B cell (primary cell): ENCODE measurements at regions of chr2 and their contacts with region 1.

Region 1: GRCh38 chr2:27281855-27282559 is at the start of gene TRIM54:
- DNase-seq: no peak
- ATAC-seq: no peak
- H3K4me3 ChIP-seq: no peak within 1 kb of the TSS
- H3K4me3 Mint-ChIP-seq: no peak within 1 kb of the TSS
- H3K27ac ChIP-seq: no peak within 1 kb of the TSS
- H3K27ac Mint-ChIP-seq: no peak within 1 kb of the TSS
- H3K4me1 ChIP-seq: no peaks in the 10 kb centered on the region
- H3K4me1 Mint-ChIP-seq: peaks cover 5% of the 10 kb centered on the region
- H3K27me3 ChIP-seq: peaks cover 0 to 9% (median 0%) of the 10 kb centered on the region in 4 experiments
- H3K27me3 Mint-ChIP-seq: peaks cover 40% of the 10 kb centered on the region
- CTCF ChIP-seq: no peak
- total RNA-seq, gene TRIM54: not detected in 2 replicates

Region 2: GRCh38 chr2:26846328-26847306 is 435.4 kb before region 1 on chr2:
- CTCF ChIA-PET with region 1: interaction called, 41 read pairs
- POLR2A ChIA-PET with region 1: no interaction called
- intact Hi-C with region 1: no loop called
- DNase-seq: peak; percentile 81
- ATAC-seq: peak; percentile 76
- H3K4me3 ChIP-seq: no peak overlapping the region
- H3K4me3 Mint-ChIP-seq: peak overlapping the region; percentile 85
- H3K27ac ChIP-seq: no peak overlapping the region
- H3K27ac Mint-ChIP-seq: no peak overlapping the region
- H3K4me1 ChIP-seq: peaks cover 37% of the 10 kb centered on the region in 2 donors
- H3K4me1 Mint-ChIP-seq: peaks cover 18% of the 10 kb centered on the region
- H3K27me3 ChIP-seq: peaks cover 0 to 58% (median 49%) of the 10 kb centered on the region in 4 experiments
- H3K27me3 Mint-ChIP-seq: peaks cover 52% of the 10 kb centered on the region
- CTCF ChIP-seq: peak; percentile 83

Region 3: GRCh38 chr2:27170581-27171333 is 111.2 kb before region 1 on chr2:
- CTCF ChIA-PET with region 1: interaction called, 20 read pairs
- POLR2A ChIA-PET with region 1: no interaction called
- intact Hi-C with region 1: no loop called
- DNase-seq: no peak
- ATAC-seq: no peak
- H3K4me3 ChIP-seq: no peak overlapping the region
- H3K4me3 Mint-ChIP-seq: peak overlapping the region; percentile 55
- H3K27ac ChIP-seq: no peak overlapping the region
- H3K27ac Mint-ChIP-seq: no peak overlapping the region
- H3K4me1 ChIP-seq: peaks cover 7 to 10% of the 10 kb centered on the region in 2 donors
- H3K4me1 Mint-ChIP-seq: peaks cover 7% of the 10 kb centered on the region
- H3K27me3 ChIP-seq: peaks cover 0 to 3% (median 0%) of the 10 kb centered on the region in 4 experiments
- H3K27me3 Mint-ChIP-seq: no peaks in the 10 kb centered on the region
- CTCF ChIP-seq: no peak

Region 4: DNA sequence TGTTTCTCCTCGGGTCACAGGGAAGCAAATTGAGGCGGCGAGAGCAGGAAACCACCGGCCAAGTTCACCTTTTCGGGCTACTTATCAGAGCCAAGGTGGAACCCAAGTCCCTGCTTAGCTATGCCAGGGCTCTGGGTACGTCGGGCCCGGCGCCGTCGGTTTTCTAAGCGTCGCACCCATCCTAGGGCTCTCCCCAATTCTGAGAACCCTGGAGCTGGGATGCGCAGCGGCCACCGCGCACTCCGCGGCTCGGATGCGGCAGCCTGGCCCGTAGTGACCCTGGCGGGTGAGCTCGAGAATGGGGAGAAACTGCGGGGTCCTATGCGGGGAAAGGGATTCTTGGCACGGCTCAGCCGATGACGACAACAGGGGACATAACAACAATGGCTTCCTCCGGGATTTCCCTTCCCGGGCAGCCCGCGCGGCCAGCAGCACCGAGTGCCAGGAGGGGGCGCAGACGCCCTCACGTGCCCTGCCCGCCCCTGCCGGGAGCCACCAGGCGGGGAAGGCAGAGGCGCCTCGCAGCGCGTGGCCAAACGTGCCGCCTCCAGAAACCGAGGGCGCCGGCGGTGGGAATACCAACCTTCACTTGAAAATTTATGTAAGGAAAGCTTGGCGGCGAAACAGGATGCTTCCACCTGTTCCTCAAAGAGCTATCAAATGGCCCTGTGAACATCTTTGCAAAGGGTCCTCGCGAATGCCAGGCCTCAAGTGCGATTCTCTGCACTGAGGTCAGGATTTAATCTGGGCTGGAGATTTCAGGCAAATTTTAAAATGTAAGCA is 17.1 kb before region 1 on chr2:
- CTCF ChIA-PET with region 1: interaction called, 50 read pairs
- POLR2A ChIA-PET with region 1: interaction called, 5 read pairs
- intact Hi-C with region 1: loop called (anchors 1 kb)
- DNase-seq: peak; percentile 88
- ATAC-seq: peak; percentile 69
- H3K4me3 ChIP-seq: peak overlapping the region; percentile 23 to 68 (median 64)
- H3K4me3 Mint-ChIP-seq: peak overlapping the region; percentile 94
- H3K27ac ChIP-seq: peak overlapping the region in 1 of 2 donors; percentile 59
- H3K27ac Mint-ChIP-seq: no peak overlapping the region
- H3K4me1 ChIP-seq: peaks cover 35 to 38% of the 10 kb centered on the region in 2 donors
- H3K4me1 Mint-ChIP-seq: peaks cover 35% of the 10 kb centered on the region
- H3K27me3 ChIP-seq: peaks cover 0 to 69% (median 32%) of the 10 kb centered on the region in 4 experiments
- H3K27me3 Mint-ChIP-seq: peaks cover 47% of the 10 kb centered on the region
- CTCF ChIP-seq: peak; percentile 68

Region 5: DNA sequence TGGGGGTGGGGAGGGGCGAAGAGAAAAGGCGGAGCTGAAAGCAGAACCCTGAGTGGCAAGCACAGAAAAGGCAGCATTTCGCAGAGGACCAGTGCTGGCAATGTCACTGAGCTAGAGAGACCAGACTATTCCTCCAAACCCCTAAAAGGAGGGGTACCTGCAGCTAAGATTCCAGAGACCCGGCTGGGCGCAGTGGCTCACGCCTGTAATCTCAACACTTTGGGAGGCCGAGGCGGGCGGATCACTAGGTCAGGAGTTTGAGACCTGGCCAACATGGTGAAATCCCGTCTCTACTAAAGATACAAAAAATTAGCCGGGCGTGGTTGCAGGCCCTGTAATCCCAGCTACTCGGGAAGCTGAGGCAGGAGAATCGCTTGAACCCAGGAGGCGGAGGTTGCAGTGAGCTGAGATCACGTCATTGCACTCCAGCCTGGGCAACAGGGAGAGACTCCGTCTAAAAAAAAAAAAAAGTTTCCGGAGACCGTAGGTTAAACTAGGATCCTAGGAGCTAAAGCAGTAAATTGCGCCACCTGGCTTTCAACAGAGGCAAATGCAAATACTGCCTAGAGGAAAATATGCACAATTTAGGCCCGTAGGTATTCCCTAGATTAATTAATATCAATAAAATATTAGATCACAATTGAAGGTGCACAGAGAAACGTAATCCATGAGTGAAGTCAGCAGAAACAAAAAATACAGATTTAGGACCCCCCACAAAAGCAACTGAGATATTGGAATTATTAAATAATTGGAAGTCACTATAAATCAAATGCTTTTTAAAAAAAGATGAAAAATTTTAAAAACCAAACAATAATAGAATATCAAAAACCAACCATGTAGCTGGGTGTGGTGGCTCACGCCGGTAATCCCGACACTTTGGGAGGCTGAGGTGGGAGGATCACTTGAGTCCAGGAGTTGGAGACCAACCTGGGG is 21.4 kb after region 1 on chr2:
- CTCF ChIA-PET with region 1: interaction called, 36 read pairs
- POLR2A ChIA-PET with region 1: no interaction called
- intact Hi-C with region 1: loop called (anchors 1 kb)
- DNase-seq: peak; percentile 70
- ATAC-seq: peak; percentile 74
- H3K4me3 ChIP-seq: peak overlapping the region in 4 of 5 experiments; percentile 7 to 38 (median 26)
- H3K4me3 Mint-ChIP-seq: peak overlapping the region; percentile 74
- H3K27ac ChIP-seq: peak overlapping the region in 1 of 2 donors; percentile 26
- H3K27ac Mint-ChIP-seq: peak overlapping the region; percentile 71
- H3K4me1 ChIP-seq: peaks cover 14 to 22% of the 10 kb centered on the region in 2 donors
- H3K4me1 Mint-ChIP-seq: peaks cover 11% of the 10 kb centered on the region
- H3K27me3 ChIP-seq: peaks cover 0 to 36% (median 10%) of the 10 kb centered on the region in 4 experiments
- H3K27me3 Mint-ChIP-seq: peaks cover 26% of the 10 kb centered on the region
- CTCF ChIP-seq: peak; percentile 96